ENCODE measurements at regions of chr10 and their contacts with region 1.

Region 1: GRCh38 chr10:102072673-102073527 is 7.8 kb downstream of the HPS6 start:
- DNase-seq: peak; percentile 71 to 89
- ATAC-seq: peak; percentile 88 to 100 (median 97)
- H3K4me3 ChIP-seq: no peak overlapping the region
- H3K4me3 Mint-ChIP-seq: no peak overlapping the region
- H3K27ac ChIP-seq: no peak overlapping the region
- H3K27ac Mint-ChIP-seq: no peak overlapping the region
- H3K4me1 ChIP-seq: peaks cover 7% of the 10 kb centered on the region
- H3K4me1 Mint-ChIP-seq: peaks cover 5 to 14% of the 10 kb centered on the region in 2 donors
- H3K27me3 ChIP-seq: no peaks in the 10 kb centered on the region
- H3K27me3 Mint-ChIP-seq: no peaks in the 10 kb centered on the region
- CTCF ChIP-seq: peak; percentile 86

Region 2: GRCh38 chr10:100979791-100980272 is 1093.1 kb before region 1 on chr10:
- intact Hi-C with region 1: no loop called
- DNase-seq: no peak
- ATAC-seq: no peak
- H3K4me3 ChIP-seq: no peak overlapping the region
- H3K4me3 Mint-ChIP-seq: no peak overlapping the region
- H3K27ac ChIP-seq: no peak overlapping the region
- H3K27ac Mint-ChIP-seq: no peak overlapping the region
- H3K4me1 ChIP-seq: no peaks in the 10 kb centered on the region
- H3K4me1 Mint-ChIP-seq: peaks cover 0 to 8% of the 10 kb centered on the region in 2 donors
- H3K27me3 ChIP-seq: no peaks in the 10 kb centered on the region
- H3K27me3 Mint-ChIP-seq: no peaks in the 10 kb centered on the region
- CTCF ChIP-seq: no peak

Region 3: GRCh38 chr10:101782811-101783735 is 289.8 kb before region 1 on chr10 and contains the start of gene NPM3:
- intact Hi-C with region 1: loop called (anchors 5 kb)
- DNase-seq: peak; percentile 75 to 86
- ATAC-seq: peak; percentile 78 to 83 (median 82)
- H3K4me3 ChIP-seq: peak within 1 kb of the TSS; percentile 77
- H3K4me3 Mint-ChIP-seq: peak within 1 kb of the TSS; percentile 100
- H3K27ac ChIP-seq: peak within 1 kb of the TSS; percentile 70
- H3K27ac Mint-ChIP-seq: peak within 1 kb of the TSS; percentile 93 to 96
- H3K4me1 ChIP-seq: peaks cover 55% of the 10 kb centered on the region
- H3K4me1 Mint-ChIP-seq: peaks cover 55 to 58% of the 10 kb centered on the region in 2 donors
- H3K27me3 ChIP-seq: peaks cover 9% of the 10 kb centered on the region
- H3K27me3 Mint-ChIP-seq: peaks cover 7 to 11% of the 10 kb centered on the region in 2 donors
- CTCF ChIP-seq: no peak
- total RNA-seq, gene NPM3: 8.2 to 9.0 (median 8.5) TPM

Region 4: GRCh38 chr10:101840741-101841453 is 232.0 kb before region 1 on chr10:
- intact Hi-C with region 1: loop called (anchors 1 kb)
- DNase-seq: peak; percentile 76 to 84
- ATAC-seq: peak; percentile 73 to 84 (median 77)
- H3K4me3 ChIP-seq: peak overlapping the region; percentile 19
- H3K4me3 Mint-ChIP-seq: peak overlapping the region; percentile 92
- H3K27ac ChIP-seq: no peak overlapping the region
- H3K27ac Mint-ChIP-seq: peak overlapping the region in 1 of 2 donors; percentile 72
- H3K4me1 ChIP-seq: peaks cover 42% of the 10 kb centered on the region
- H3K4me1 Mint-ChIP-seq: peaks cover 14 to 47% of the 10 kb centered on the region in 2 donors
- H3K27me3 ChIP-seq: peaks cover 2% of the 10 kb centered on the region
- H3K27me3 Mint-ChIP-seq: peaks cover 13 to 15% of the 10 kb centered on the region in 2 donors
- CTCF ChIP-seq: peak; percentile 90

Region 5: GRCh38 chr10:101889256-101890210 is 183.4 kb before region 1 on chr10:
- intact Hi-C with region 1: loop called (anchors 1 kb)
- DNase-seq: peak; percentile 44 to 73
- ATAC-seq: peak; percentile 60 to 70 (median 67)
- H3K4me3 ChIP-seq: no peak overlapping the region
- H3K4me3 Mint-ChIP-seq: no peak overlapping the region
- H3K27ac ChIP-seq: no peak overlapping the region
- H3K27ac Mint-ChIP-seq: peak overlapping the region in 1 of 2 donors; percentile 25
- H3K4me1 ChIP-seq: no peaks in the 10 kb centered on the region
- H3K4me1 Mint-ChIP-seq: peaks cover 0 to 17% of the 10 kb centered on the region in 2 donors
- H3K27me3 ChIP-seq: no peaks in the 10 kb centered on the region
- H3K27me3 Mint-ChIP-seq: no peaks in the 10 kb centered on the region
- CTCF ChIP-seq: peak; percentile 73

Region 6: DNA sequence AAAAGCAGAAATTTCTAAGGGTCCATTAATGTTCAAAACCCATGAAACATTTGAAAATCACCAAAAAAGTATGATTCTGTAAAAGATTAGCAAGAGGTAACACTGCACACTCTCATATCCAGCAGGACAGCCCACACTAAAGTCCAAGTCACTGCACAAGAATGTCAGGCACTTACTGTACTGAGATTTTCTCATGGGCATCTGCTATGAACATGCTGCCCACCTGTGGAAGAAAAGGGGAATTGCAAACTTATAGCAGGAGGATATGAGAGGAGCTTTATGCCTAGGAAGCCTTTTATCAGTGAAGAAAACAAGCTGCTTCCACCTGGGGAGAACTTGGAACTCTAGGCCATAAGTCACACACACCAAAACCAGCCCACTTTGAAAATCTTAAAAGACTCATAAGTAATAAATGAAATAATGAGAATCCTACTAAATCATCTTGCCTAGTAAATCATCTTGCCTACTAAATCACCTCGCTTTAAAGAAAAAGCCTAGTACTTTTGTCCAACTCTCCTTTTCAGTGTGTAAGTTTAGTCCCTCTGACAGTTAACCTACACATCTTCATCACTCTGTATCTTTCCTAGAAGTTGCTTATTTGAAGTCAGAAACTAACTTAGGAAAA is 63.0 kb before region 1 on chr10:
- intact Hi-C with region 1: loop called (anchors 5 kb)
- DNase-seq: peak in 1 of 2 donors; percentile 75
- ATAC-seq: peak; percentile 80 to 92 (median 90)
- H3K4me3 ChIP-seq: no peak overlapping the region
- H3K4me3 Mint-ChIP-seq: no peak overlapping the region
- H3K27ac ChIP-seq: no peak overlapping the region
- H3K27ac Mint-ChIP-seq: no peak overlapping the region
- H3K4me1 ChIP-seq: no peaks in the 10 kb centered on the region
- H3K4me1 Mint-ChIP-seq: peaks cover 4 to 5% of the 10 kb centered on the region in 2 donors
- H3K27me3 ChIP-seq: no peaks in the 10 kb centered on the region
- H3K27me3 Mint-ChIP-seq: no peaks in the 10 kb centered on the region
- CTCF ChIP-seq: peak; percentile 69